ENCODE measurements at regions of chr7 and their contacts with region 1.

Region 1: GRCh38 chr7:151310578-151310977 is 31.0 kb upstream of the NUB1 start:
- DNase-seq: no peak
- H3K4me3 ChIP-seq: no peak overlapping the region
- CTCF ChIP-seq: peak; percentile 41

Region 2: DNA sequence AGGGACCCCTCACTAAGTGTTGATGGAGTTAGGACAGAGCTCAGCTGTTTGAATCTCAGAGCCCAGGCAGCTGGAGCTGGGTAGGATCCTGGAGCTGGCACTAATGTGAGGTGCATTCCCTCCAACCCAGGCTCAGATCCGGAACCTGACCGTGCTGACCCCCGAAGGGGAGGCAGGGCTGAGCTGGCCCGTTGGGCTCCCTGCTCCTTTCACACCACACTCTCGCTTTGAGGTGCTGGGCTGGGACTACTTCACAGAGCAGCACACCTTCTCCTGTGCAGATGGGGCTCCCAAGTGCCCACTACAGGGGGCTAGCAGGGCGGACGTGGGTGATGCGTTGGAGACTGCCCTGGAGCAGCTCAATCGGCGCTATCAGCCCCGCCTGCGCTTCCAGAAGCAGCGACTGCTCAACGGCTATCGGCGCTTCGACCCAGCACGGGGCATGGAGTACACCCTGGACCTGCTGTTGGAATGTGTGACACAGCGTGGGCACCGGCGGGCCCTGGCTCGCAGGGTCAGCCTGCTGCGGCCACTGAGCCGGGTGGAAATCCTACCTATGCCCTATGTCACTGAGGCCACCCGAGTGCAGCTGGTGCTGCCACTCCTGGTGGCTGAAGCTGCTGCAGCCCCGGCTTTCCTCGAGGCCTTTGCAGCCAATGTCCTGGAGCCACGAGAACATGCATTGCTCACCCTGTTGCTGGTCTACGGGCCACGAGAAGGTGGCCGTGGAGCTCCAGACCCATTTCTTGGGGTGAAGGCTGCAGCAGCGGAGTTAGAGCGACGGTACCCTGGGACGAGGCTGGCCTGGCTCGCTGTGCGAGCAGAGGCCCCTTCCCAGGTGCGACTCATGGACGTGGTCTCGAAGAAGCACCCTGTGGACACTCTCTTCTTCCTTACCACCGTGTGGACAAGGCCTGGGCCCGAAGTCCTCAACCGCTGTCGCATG is 73.1 kb before region 1 on chr7:
- in situ Hi-C with region 1: loop called (anchors 5 kb)
- DNase-seq: no peak
- H3K4me3 ChIP-seq: no peak overlapping the region
- CTCF ChIP-seq: no peak

Region 3: GRCh38 chr7:151361193-151361959 is 50.8 kb after region 1 on chr7:
- in situ Hi-C with region 1: loop called (anchors 5 kb)
- DNase-seq: no peak
- H3K4me3 ChIP-seq: no peak overlapping the region
- CTCF ChIP-seq: no peak

Measured in astrocyte of the cerebellum (primary cell).